ENCODE measurements at regions of chr3 and their contacts with region 1.

Region 1: GRCh38 chr3:117355566-117355965 is 646.0 kb downstream of the TUSC7 start:
- DNase-seq: no peak
- ATAC-seq: no peak
- H3K4me3 ChIP-seq: no peak overlapping the region
- H3K4me3 Mint-ChIP-seq: no peak overlapping the region
- H3K27ac ChIP-seq: no peak overlapping the region
- H3K27ac Mint-ChIP-seq: no peak overlapping the region
- H3K4me1 ChIP-seq: no peaks in the 10 kb centered on the region
- H3K4me1 Mint-ChIP-seq: no peaks in the 10 kb centered on the region
- H3K27me3 ChIP-seq: no peaks in the 10 kb centered on the region
- H3K27me3 Mint-ChIP-seq: no peaks in the 10 kb centered on the region

Region 2: GRCh38 chr3:117380631-117381030 is 25.1 kb after region 1 on chr3:
- CTCF ChIA-PET with region 1: no interaction called
- POLR2A ChIA-PET with region 1: no interaction called
- intact Hi-C with region 1: loop called in 1 of 2 experiments (anchors 1 kb)
- DNase-seq: no peak
- ATAC-seq: no peak
- H3K4me3 ChIP-seq: no peak overlapping the region
- H3K4me3 Mint-ChIP-seq: no peak overlapping the region
- H3K27ac ChIP-seq: no peak overlapping the region
- H3K27ac Mint-ChIP-seq: no peak overlapping the region
- H3K4me1 ChIP-seq: no peaks in the 10 kb centered on the region
- H3K4me1 Mint-ChIP-seq: no peaks in the 10 kb centered on the region
- H3K27me3 ChIP-seq: no peaks in the 10 kb centered on the region
- H3K27me3 Mint-ChIP-seq: no peaks in the 10 kb centered on the region